IMR-90 (cell line): ENCODE measurements at regions of chr2 and their contacts with region 1.

Region 1: GRCh38 chr2:146661473-146662096 is 1183.2 kb upstream of the ACVR2A start:
- DNase-seq: peak; percentile 60
- ATAC-seq: peak; percentile 69
- H3K4me3 ChIP-seq: no peak overlapping the region
- H3K27ac ChIP-seq: no peak overlapping the region
- H3K4me1 ChIP-seq: no peaks in the 10 kb centered on the region
- H3K27me3 ChIP-seq: no peaks in the 10 kb centered on the region
- CTCF ChIP-seq: peak; percentile 79
- POLR2A ChIP-seq: no peak
- RAD21 ChIP-seq: peak; percentile 85

Region 2: DNA sequence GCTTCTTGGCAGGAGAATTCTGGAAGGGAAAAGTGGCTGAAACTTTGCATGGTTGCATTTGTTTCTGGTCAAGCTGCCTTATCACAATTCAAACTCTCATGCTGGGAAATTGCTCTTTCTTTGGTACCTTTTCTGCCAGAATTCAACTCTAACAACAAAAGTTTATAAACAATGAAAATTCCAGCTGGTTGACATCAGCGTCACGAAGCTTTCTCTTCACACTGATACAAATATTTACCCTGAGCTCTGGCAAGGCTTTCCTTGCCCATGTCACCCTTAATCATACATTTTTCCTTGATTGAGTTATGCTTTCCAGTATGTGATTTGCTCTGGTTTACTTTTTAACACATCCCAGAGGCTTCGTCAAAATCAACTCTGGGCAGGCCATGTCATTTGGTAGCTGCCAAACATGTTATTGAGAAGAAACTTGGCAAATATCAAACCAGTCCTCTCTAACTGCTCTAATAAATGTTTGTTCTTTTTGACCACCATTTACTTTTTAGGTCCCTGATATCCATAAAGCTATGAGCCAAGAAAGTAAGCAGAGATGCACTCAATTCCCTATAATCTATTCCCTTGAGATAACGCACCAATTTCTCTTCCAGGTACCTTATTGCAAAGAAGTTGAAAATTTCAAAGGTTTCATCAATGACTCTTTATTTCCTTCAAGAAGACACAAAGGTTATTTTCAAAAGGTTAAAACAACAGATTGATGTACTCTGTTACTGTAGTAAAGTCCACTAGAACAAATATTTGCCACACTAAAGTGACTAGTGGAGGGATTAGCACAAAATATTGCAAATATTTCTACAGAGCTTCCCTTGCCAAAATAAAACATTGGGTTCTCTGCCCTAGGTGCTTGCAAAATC is 900.6 kb before region 1 on chr2:
- CTCF ChIA-PET with region 1: no interaction called
- POLR2A ChIA-PET with region 1: no interaction called
- dilution Hi-C with region 1: no loop called
- in situ Hi-C with region 1: loop called (anchors 10 kb)
- intact Hi-C with region 1: loop called (anchors 2 kb)
- DNase-seq: peak; percentile 79
- ATAC-seq: peak; percentile 63
- H3K4me3 ChIP-seq: no peak overlapping the region
- H3K27ac ChIP-seq: peak overlapping the region; percentile 86; the same call in 1 of the 2 replicates
- H3K4me1 ChIP-seq: peaks cover 12% of the 10 kb centered on the region
- H3K27me3 ChIP-seq: no peaks in the 10 kb centered on the region
- CTCF ChIP-seq: no peak
- POLR2A ChIP-seq: no peak
- RAD21 ChIP-seq: no peak

Region 3: DNA sequence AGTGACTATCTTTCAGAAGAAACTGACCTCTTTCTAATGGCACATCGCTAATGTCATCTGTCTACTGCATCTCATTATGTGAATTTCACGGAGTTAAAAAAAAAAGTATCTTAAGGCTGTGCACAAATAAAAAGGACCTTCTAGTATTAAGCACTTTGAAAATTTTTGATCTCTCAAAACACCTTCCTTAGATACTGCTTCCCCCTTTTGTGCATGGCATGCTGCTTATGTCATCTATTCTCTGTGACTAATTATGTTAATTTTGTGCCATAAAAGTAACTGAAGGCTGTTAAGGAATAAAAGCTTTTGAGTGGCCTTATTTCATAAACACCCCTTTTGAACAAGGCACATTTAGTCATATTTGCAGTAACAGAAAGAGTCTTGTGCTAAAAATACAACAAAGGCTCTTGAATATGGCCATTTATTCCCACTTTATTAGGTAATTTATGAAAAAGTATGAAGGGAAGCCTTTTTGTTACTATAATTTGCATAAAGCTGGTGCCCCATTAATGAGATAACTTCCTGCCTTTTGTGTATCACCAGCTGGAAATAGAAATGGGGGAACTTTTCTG is 729.7 kb before region 1 on chr2:
- CTCF ChIA-PET with region 1: no interaction called
- POLR2A ChIA-PET with region 1: no interaction called
- dilution Hi-C with region 1: no loop called
- in situ Hi-C with region 1: no loop called
- intact Hi-C with region 1: loop called (anchors 5 kb)
- DNase-seq: no peak
- ATAC-seq: no peak
- H3K4me3 ChIP-seq: no peak overlapping the region
- H3K27ac ChIP-seq: no peak overlapping the region
- H3K4me1 ChIP-seq: no peaks in the 10 kb centered on the region
- H3K27me3 ChIP-seq: no peaks in the 10 kb centered on the region
- CTCF ChIP-seq: no peak
- POLR2A ChIP-seq: no peak
- RAD21 ChIP-seq: no peak

Region 4: DNA sequence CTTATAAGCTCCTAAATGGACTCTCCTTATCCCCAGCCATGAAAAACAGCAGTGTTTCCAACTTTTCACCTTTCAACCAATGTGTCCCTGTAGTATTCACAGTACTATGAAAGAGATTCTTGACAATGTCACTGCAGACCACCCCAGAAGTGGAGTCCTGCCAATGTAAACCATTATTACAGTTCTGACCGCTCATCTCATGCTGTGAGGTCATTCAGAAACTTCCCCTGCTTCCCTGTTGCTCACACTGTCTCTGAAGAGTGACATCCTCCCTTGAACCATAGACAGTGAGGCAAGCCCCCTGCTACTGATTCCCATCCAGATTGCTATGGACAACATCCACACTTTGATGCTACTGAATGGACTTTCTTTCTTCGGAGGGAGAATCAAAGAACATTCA is 340.4 kb before region 1 on chr2:
- CTCF ChIA-PET with region 1: interaction called, 3 read pairs
- POLR2A ChIA-PET with region 1: no interaction called
- dilution Hi-C with region 1: no loop called
- in situ Hi-C with region 1: no loop called
- intact Hi-C with region 1: loop called (anchors 5 kb)
- DNase-seq: peak; percentile 72
- ATAC-seq: peak; percentile 41; the same call in 1 of the 2 replicates
- H3K4me3 ChIP-seq: no peak overlapping the region
- H3K27ac ChIP-seq: no peak overlapping the region
- H3K4me1 ChIP-seq: peaks cover 4% of the 10 kb centered on the region; the same call in 1 of the 2 replicates
- H3K27me3 ChIP-seq: no peaks in the 10 kb centered on the region
- CTCF ChIP-seq: no peak
- POLR2A ChIP-seq: no peak
- RAD21 ChIP-seq: no peak

Region 5: GRCh38 chr2:146532509-146533147 is 129.0 kb before region 1 on chr2:
- CTCF ChIA-PET with region 1: no interaction called
- POLR2A ChIA-PET with region 1: no interaction called
- dilution Hi-C with region 1: no loop called
- in situ Hi-C with region 1: no loop called
- intact Hi-C with region 1: loop called (anchors 5 kb)
- DNase-seq: no peak
- ATAC-seq: no peak
- H3K4me3 ChIP-seq: no peak overlapping the region
- H3K27ac ChIP-seq: no peak overlapping the region
- H3K4me1 ChIP-seq: no peaks in the 10 kb centered on the region
- H3K27me3 ChIP-seq: no peaks in the 10 kb centered on the region
- CTCF ChIP-seq: no peak
- POLR2A ChIP-seq: no peak
- RAD21 ChIP-seq: no peak